AG04450 (cell line): ENCODE measurements at regions of chr15 and their contacts with region 1.

Region 1: GRCh38 chr15:70097337-70098169 is at the start of gene TLE3:
- DNase-seq: peak; percentile 97
- H3K4me3 ChIP-seq: peak within 1 kb of the TSS; percentile 79
- H3K27ac ChIP-seq: peak within 1 kb of the TSS; percentile 75
- H3K27me3 ChIP-seq: peaks cover under 1% of the 10 kb centered on the region
- CTCF ChIP-seq: peak; percentile 43
- polyA plus RNA-seq, gene TLE3: 7.5 and 10.8 TPM in 2 replicates

Region 2: GRCh38 chr15:69841113-69841828 is 256.3 kb before region 1 on chr15:
- CTCF ChIA-PET with region 1: no interaction called
- POLR2A ChIA-PET with region 1: no interaction called
- DNase-seq: no peak
- H3K4me3 ChIP-seq: no peak overlapping the region
- H3K27ac ChIP-seq: no peak overlapping the region
- H3K27me3 ChIP-seq: peaks cover 16% of the 10 kb centered on the region
- CTCF ChIP-seq: no peak

Region 3: DNA sequence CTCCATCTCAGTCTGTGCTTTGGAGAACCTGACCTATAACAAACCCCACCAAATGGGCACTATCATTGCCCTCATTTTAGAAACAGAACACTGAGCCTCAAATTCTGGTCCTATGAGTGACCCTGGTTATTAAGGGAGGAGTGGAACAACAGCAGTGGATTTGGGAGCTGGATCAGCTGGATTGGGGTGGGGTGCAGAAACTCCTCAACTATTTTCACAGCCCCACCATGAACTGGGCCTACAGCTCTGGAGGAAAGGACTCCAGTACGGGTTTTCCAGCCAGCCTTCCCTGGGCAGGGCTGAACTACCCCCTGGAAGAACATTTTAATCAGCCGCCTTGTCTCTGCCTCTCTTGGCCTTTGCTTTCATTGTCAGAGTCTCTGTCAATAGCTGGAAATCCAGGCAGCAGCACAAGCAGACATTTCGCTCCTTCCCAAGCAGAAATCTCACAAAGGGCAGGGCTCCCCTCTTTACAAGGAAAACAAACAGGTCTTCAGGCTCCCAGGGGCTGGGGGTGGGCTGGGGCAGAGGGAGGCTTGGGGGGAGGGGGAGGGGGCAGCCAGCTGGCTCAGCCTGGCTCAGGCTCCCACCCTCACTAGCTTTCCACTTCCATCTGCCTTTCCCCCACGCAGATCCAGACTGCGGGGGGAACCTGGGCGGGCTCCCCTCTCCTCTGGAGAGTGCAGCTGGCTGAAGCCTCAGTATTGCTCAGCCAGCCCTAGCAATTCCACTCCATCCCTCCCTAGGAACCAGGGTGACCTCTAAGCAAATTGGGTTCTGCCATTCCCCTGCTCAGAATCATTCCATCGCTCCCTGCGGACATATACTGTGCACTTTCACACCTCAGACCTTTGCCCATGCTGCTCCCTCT is 13.9 kb after region 1 on chr15:
- CTCF ChIA-PET with region 1: interaction called, 3 read pairs
- POLR2A ChIA-PET with region 1: interaction called, 49 read pairs
- DNase-seq: peak; percentile 63
- H3K4me3 ChIP-seq: peak overlapping the region; percentile 11
- H3K27ac ChIP-seq: peak overlapping the region; percentile 57
- H3K27me3 ChIP-seq: peaks cover 18% of the 10 kb centered on the region
- CTCF ChIP-seq: no peak

Region 4: GRCh38 chr15:70165716-70166284 is 68.2 kb after region 1 on chr15:
- CTCF ChIA-PET with region 1: no interaction called
- POLR2A ChIA-PET with region 1: no interaction called
- DNase-seq: no peak
- H3K4me3 ChIP-seq: no peak overlapping the region
- H3K27ac ChIP-seq: no peak overlapping the region
- H3K27me3 ChIP-seq: peaks cover 4% of the 10 kb centered on the region
- CTCF ChIP-seq: no peak

Region 5: GRCh38 chr15:70466895-70467529 is 369.5 kb after region 1 on chr15:
- CTCF ChIA-PET with region 1: interaction called, 10 read pairs
- POLR2A ChIA-PET with region 1: interaction called, 4 read pairs
- DNase-seq: peak; percentile 26
- H3K4me3 ChIP-seq: no peak overlapping the region
- H3K27ac ChIP-seq: no peak overlapping the region
- H3K27me3 ChIP-seq: peaks cover 22% of the 10 kb centered on the region
- CTCF ChIP-seq: peak; percentile 78

Region 6: GRCh38 chr15:70474471-70475396 is 377.2 kb after region 1 on chr15:
- CTCF ChIA-PET with region 1: interaction called, 6 read pairs
- POLR2A ChIA-PET with region 1: interaction called, 12 read pairs
- DNase-seq: peak; percentile 90
- H3K4me3 ChIP-seq: peak overlapping the region; percentile 31
- H3K27ac ChIP-seq: peak overlapping the region; percentile 95
- H3K27me3 ChIP-seq: peaks cover 10% of the 10 kb centered on the region
- CTCF ChIP-seq: no peak